Spleen (tissue), 13 donors: ENCODE measurements at regions of chr4 and their contacts with region 1.

Region 1: GRCh38 chr4:6926681-6927478 is 17.3 kb downstream of the TBC1D14 start:
- DNase-seq: no peak
- H3K4me3 ChIP-seq: peak overlapping the region in 3 of 8 donors; percentile 4 to 38 (median 6)
- H3K27ac ChIP-seq: peak overlapping the region; percentile 3 to 92 (median 85)
- H3K4me1 ChIP-seq: peaks cover 25 to 96% (median 67%) of the 10 kb centered on the region in 6 donors
- H3K27me3 ChIP-seq: no peaks in the 10 kb centered on the region
- CTCF ChIP-seq: no peak
- POLR2A ChIP-seq: no peak

Region 2: GRCh38 chr4:6986781-6987587 is 60.1 kb after region 1 on chr4:
- intact Hi-C with region 1: loop called (anchors 10 kb)
- DNase-seq: peak; percentile 99
- H3K4me3 ChIP-seq: peak overlapping the region; percentile 64 to 89 (median 82)
- H3K27ac ChIP-seq: peak overlapping the region; percentile 89 to 96 (median 93)
- H3K4me1 ChIP-seq: peaks cover 46 to 97% (median 85%) of the 10 kb centered on the region in 6 donors
- H3K27me3 ChIP-seq: no peaks in the 10 kb centered on the region
- CTCF ChIP-seq: peak in 6 of 11 experiments; percentile 21 to 42 (median 30)
- POLR2A ChIP-seq: peak; percentile 25 to 85 (median 29)